CD4-positive, alpha-beta memory T cell (primary cell): ENCODE measurements at regions of chr1 and their contacts with region 1.

Region 1: GRCh38 chr1:151993654-151994496 is at the start of gene S100A10:
- DNase-seq: peak; percentile 83 to 87 (median 86)
- H3K4me3 ChIP-seq: peak within 1 kb of the TSS; percentile 55 to 88
- H3K4me3 Mint-ChIP-seq: peak within 1 kb of the TSS; percentile 95 to 99 (median 98)
- H3K27ac ChIP-seq: peak within 1 kb of the TSS; percentile 92
- H3K27ac Mint-ChIP-seq: peak within 1 kb of the TSS; percentile 97 to 99 (median 98)
- H3K4me1 ChIP-seq: peaks cover 54% of the 10 kb centered on the region
- H3K4me1 Mint-ChIP-seq: peaks cover 38 to 61% (median 46%) of the 10 kb centered on the region in 4 donors
- H3K27me3 ChIP-seq: no peaks in the 10 kb centered on the region
- H3K27me3 Mint-ChIP-seq: no peaks in the 10 kb centered on the region
- total RNA-seq, gene S100A10: 218 to 231 TPM

Region 2: GRCh38 chr1:151539990-151540981 is 453.6 kb before region 1 on chr1 and contains the start of gene TUFT1:
- CTCF ChIA-PET with region 1: interaction called, 4 read pairs
- POLR2A ChIA-PET with region 1: no interaction called
- intact Hi-C with region 1: loop called (anchors 10 kb)
- DNase-seq: peak; percentile 92 to 96 (median 93)
- H3K4me3 ChIP-seq: peak within 1 kb of the TSS; percentile 50 to 62
- H3K4me3 Mint-ChIP-seq: peak within 1 kb of the TSS; percentile 95 to 98 (median 96)
- H3K27ac ChIP-seq: peak within 1 kb of the TSS; percentile 57
- H3K27ac Mint-ChIP-seq: peak within 1 kb of the TSS; percentile 78 to 97 (median 94)
- H3K4me1 ChIP-seq: peaks cover 18% of the 10 kb centered on the region
- H3K4me1 Mint-ChIP-seq: peaks cover 8 to 26% (median 19%) of the 10 kb centered on the region in 4 donors
- H3K27me3 ChIP-seq: no peaks in the 10 kb centered on the region
- H3K27me3 Mint-ChIP-seq: no peaks in the 10 kb centered on the region
- total RNA-seq, gene TUFT1: 3.5 to 4.4 TPM

Region 3: GRCh38 chr1:151790071-151790940 is 203.6 kb before region 1 on chr1 and contains the start of gene TDRKH:
- CTCF ChIA-PET with region 1: interaction called, 3 read pairs
- POLR2A ChIA-PET with region 1: interaction called, 4 read pairs
- intact Hi-C with region 1: loop called (anchors 5 kb)
- DNase-seq: peak; percentile 98 to 100 (median 99)
- H3K4me3 ChIP-seq: peak within 1 kb of the TSS; percentile 86 to 100
- H3K4me3 Mint-ChIP-seq: peak within 1 kb of the TSS; percentile 91 to 99 (median 96)
- H3K27ac ChIP-seq: peak within 1 kb of the TSS; percentile 51
- H3K27ac Mint-ChIP-seq: peak within 1 kb of the TSS; percentile 85 to 98 (median 90)
- H3K4me1 ChIP-seq: peaks cover 29% of the 10 kb centered on the region
- H3K4me1 Mint-ChIP-seq: peaks cover 21 to 41% (median 34%) of the 10 kb centered on the region in 4 donors
- H3K27me3 ChIP-seq: no peaks in the 10 kb centered on the region
- H3K27me3 Mint-ChIP-seq: no peaks in the 10 kb centered on the region
- total RNA-seq, gene TDRKH: 29.1 to 29.3 TPM

Region 4: GRCh38 chr1:151909150-151910149 is 84.4 kb before region 1 on chr1 and contains the start of gene THEM4:
- CTCF ChIA-PET with region 1: interaction called, 7 read pairs
- POLR2A ChIA-PET with region 1: interaction called, 20 read pairs
- intact Hi-C with region 1: no loop called
- DNase-seq: peak; percentile 81 to 90 (median 83)
- H3K4me3 ChIP-seq: peak within 1 kb of the TSS; percentile 76 to 79
- H3K4me3 Mint-ChIP-seq: peak within 1 kb of the TSS; percentile 83 to 91 (median 86)
- H3K27ac ChIP-seq: peak within 1 kb of the TSS; percentile 61
- H3K27ac Mint-ChIP-seq: peak within 1 kb of the TSS; percentile 73 to 94 (median 89)
- H3K4me1 ChIP-seq: peaks cover 53% of the 10 kb centered on the region
- H3K4me1 Mint-ChIP-seq: peaks cover 22 to 48% (median 39%) of the 10 kb centered on the region in 4 donors
- H3K27me3 ChIP-seq: no peaks in the 10 kb centered on the region
- H3K27me3 Mint-ChIP-seq: no peaks in the 10 kb centered on the region
- total RNA-seq, gene THEM4: 105 to 106 TPM

Region 5: GRCh38 chr1:151945725-151946364 is 48.0 kb before region 1 on chr1:
- CTCF ChIA-PET with region 1: interaction called, 340 read pairs
- POLR2A ChIA-PET with region 1: interaction called, 30 read pairs
- intact Hi-C with region 1: loop called (anchors 2 kb)
- DNase-seq: peak; percentile 87 to 97 (median 93)
- H3K4me3 ChIP-seq: peak overlapping the region in 1 of 2 donors; percentile 25
- H3K4me3 Mint-ChIP-seq: peak overlapping the region; percentile 49 to 80 (median 67)
- H3K27ac ChIP-seq: peak overlapping the region; percentile 82
- H3K27ac Mint-ChIP-seq: peak overlapping the region; percentile 94 to 98 (median 96)
- H3K4me1 ChIP-seq: peaks cover 53% of the 10 kb centered on the region
- H3K4me1 Mint-ChIP-seq: peaks cover 44 to 48% (median 47%) of the 10 kb centered on the region in 4 donors
- H3K27me3 ChIP-seq: no peaks in the 10 kb centered on the region
- H3K27me3 Mint-ChIP-seq: no peaks in the 10 kb centered on the region

Region 6: DNA sequence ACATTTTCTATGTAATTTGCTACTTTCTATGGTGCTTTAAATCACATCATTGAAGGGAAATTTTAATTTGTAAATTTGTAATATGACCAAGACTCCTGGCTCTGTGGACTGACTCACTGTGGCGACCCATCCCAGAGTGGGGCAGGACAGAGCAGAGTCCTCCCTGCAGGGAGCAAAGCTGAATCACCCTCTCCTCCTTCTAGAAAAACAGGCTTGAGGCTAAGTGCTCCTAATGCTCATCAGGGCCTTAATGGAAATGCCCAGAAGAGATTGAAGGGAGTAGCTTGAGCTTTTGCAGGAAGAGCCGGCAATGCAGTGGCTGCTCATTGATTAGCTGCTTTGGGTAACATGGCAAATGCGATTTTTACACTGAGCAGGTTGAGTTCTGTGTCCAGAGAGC is 17.0 kb before region 1 on chr1:
- CTCF ChIA-PET with region 1: interaction called, 270 read pairs
- POLR2A ChIA-PET with region 1: interaction called, 16 read pairs
- intact Hi-C with region 1: loop called (anchors 1 kb)
- DNase-seq: no peak
- H3K4me3 ChIP-seq: no peak overlapping the region
- H3K4me3 Mint-ChIP-seq: no peak overlapping the region
- H3K27ac ChIP-seq: no peak overlapping the region
- H3K27ac Mint-ChIP-seq: no peak overlapping the region
- H3K4me1 ChIP-seq: no peaks in the 10 kb centered on the region
- H3K4me1 Mint-ChIP-seq: peaks cover 10 to 16% (median 13%) of the 10 kb centered on the region in 4 donors
- H3K27me3 ChIP-seq: no peaks in the 10 kb centered on the region
- H3K27me3 Mint-ChIP-seq: peaks cover 0 to 1% of the 10 kb centered on the region in 2 donors

Region 7: DNA sequence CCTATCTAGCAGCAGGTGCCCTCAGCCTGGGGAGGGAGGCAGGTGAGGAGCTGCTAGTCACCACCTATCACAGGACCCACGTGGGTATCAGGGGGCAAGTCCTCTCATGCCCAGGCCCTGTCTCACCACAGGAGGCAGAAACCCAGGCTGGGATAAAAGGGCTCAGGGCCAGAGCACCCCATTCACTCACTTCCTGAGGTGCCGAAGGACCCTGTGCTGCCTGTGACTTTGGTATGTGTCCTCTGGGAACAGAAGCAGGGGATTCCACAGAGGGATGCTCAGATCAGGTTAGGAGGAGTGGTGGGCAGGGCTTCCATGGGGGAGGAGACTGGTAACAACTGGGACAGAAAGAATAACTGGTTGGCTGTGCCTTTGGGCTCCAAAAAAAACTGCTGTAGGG is 792.2 kb after region 1 on chr1 and contains the start of gene LCE1E:
- CTCF ChIA-PET with region 1: no interaction called
- POLR2A ChIA-PET with region 1: no interaction called
- intact Hi-C with region 1: no loop called
- DNase-seq: no peak
- H3K4me3 ChIP-seq: no peak within 1 kb of the TSS
- H3K4me3 Mint-ChIP-seq: no peak within 1 kb of the TSS
- H3K27ac ChIP-seq: no peak within 1 kb of the TSS
- H3K27ac Mint-ChIP-seq: no peak within 1 kb of the TSS
- H3K4me1 ChIP-seq: no peaks in the 10 kb centered on the region
- H3K4me1 Mint-ChIP-seq: no peaks in the 10 kb centered on the region
- H3K27me3 ChIP-seq: peaks cover 4% of the 10 kb centered on the region
- H3K27me3 Mint-ChIP-seq: peaks cover 15 to 46% of the 10 kb centered on the region in 2 donors
- total RNA-seq, gene LCE1E: not detected